ENCODE measurements at regions of chr4 and their contacts with region 1.

Region 1: DNA sequence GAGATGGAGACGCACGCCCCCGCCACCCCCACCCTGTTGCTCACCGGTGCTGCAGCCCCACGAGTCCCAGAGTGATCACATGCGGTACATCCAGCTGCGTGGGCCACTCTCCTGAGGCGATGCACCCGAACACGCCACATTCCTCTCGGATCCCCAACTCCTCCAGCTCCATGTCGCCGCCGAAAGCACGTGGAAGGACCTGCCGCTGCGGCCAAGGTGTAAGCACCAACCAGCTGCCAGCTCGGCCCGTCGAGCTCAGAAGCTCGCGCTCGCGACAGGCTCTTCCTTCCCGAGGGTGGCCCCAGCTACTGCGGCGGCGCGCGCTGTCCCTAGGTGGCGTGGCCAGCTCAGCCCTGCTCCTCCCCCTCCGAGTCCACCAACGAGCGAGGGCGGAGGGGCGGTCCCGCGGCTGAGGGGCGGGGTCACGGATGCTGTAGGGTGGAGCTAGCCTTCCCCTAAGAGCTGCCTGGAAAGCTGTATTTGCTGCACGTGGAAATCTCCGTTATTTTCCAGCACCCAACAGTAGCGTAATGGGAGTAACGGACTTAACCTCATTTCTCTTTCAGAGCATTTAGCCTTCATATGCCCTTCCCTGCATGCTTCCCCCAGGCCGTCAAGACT is at the start of gene PPAT:
- DNase-seq: peak; percentile 93
- ATAC-seq: peak; percentile 90
- H3K4me3 ChIP-seq: peak within 1 kb of the TSS; percentile 75 to 92 (median 80)
- H3K27ac ChIP-seq: peak within 1 kb of the TSS; percentile 98
- H3K4me1 ChIP-seq: peaks cover 48% of the 10 kb centered on the region
- H3K27me3 ChIP-seq: no peaks in the 10 kb centered on the region; a peak in 1 of 5 replicates
- CTCF ChIP-seq: peak; percentile 62
- EP300 ChIP-seq: peak in 1 of 2 experiments; percentile 5; a peak in 1 of 4 replicates
- POLR2A ChIP-seq: peak in 1 of 2 experiments; percentile 83; a peak in 2 of 4 replicates
- RAD21 ChIP-seq: no peak
- total RNA-seq, gene PPAT: 62.6 and 98.4 TPM in 2 replicates

Region 2: DNA sequence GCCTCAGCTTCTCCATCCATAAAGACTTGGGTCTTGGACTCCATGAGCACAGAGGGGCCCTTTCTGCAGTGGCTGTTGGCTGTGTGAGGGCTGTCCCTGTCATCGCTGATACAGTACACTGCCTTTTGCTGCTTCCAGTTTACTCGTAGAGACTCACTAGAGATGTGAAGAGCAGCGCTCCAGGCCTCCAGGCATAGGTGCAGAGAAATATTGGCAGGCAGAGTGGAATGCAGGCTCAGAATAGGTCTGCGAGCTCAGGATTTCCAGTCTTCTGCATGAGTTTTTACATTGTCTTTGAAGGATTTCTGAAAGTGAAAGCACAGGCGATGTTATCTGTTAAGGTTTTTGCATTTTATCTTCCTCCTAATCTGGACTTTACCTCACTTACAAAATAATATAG is 145.5 kb before region 1 on chr4:
- CTCF ChIA-PET with region 1: no interaction called
- POLR2A ChIA-PET with region 1: no interaction called
- in situ Hi-C with region 1: no loop called
- intact Hi-C with region 1: no loop called
- DNase-seq: no peak
- ATAC-seq: no peak
- H3K4me3 ChIP-seq: no peak overlapping the region
- H3K27ac ChIP-seq: no peak overlapping the region
- H3K4me1 ChIP-seq: no peaks in the 10 kb centered on the region
- H3K27me3 ChIP-seq: no peaks in the 10 kb centered on the region; a peak in 1 of 5 replicates
- CTCF ChIP-seq: no peak
- EP300 ChIP-seq: no peak
- POLR2A ChIP-seq: no peak
- RAD21 ChIP-seq: no peak

Region 3: DNA sequence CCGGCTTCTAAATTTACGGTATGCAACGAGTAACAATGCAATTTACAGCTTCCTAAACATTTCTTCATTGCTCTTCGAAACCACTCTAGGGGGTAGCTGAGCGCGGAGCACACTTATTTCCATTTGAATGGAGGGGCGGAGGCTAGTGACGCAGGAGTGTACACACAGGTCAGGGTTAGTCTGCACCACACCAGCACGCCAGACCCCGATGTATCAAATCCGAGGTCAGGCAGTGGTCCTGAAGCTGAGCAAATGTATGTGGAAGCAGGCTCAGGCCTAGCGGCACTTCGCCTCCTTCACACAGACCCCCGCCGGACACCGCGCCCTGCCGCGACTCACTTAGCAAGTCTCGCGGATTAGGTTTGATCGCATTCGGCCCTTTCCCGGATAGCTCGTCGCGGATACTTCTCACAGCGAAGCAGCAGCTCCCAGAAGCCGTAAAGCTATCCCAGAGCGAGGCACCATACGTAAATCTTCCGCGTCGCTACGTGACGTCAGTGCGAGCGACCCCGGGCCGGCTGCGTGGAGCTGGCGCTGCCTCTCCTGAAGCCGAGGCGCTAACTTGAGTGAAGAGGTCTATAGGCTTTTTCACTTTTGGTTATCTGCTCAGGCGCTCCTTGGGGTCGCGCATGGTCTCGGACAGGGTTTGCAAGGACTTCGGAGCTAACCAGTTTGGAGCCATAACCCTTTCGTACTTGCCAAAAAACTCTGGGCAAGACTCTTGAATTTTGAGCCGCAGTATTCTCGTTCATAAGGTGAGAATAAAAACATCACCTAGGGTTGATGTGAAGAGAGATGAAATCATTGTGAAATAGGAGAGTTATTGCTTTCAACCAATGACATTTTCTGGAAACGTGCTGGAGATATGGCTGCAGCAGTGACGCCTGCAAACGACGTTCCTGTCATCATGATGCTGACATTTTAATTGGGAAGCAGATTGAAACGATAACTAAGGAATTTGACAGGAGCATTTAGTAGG is 48.1 kb before region 1 on chr4 and contains the start of gene AASDH:
- CTCF ChIA-PET with region 1: no interaction called
- POLR2A ChIA-PET with region 1: interaction called, 67 read pairs
- in situ Hi-C with region 1: no loop called
- intact Hi-C with region 1: loop called (anchors 1 kb)
- DNase-seq: peak; percentile 88
- ATAC-seq: peak; percentile 92
- H3K4me3 ChIP-seq: peak within 1 kb of the TSS; percentile 71 to 87 (median 85)
- H3K27ac ChIP-seq: peak within 1 kb of the TSS; percentile 97
- H3K4me1 ChIP-seq: peaks cover 28% of the 10 kb centered on the region
- H3K27me3 ChIP-seq: no peaks in the 10 kb centered on the region; a peak in 1 of 5 replicates
- CTCF ChIP-seq: 0 out of 2 replicates have a peak, but pooled peaks have one; percentile 11
- EP300 ChIP-seq: 0 out of 4 replicates have a peak, but pooled peaks of 1 of the 2 experiments have one; percentile 16
- POLR2A ChIP-seq: peak; percentile 91 to 96
- RAD21 ChIP-seq: peak; percentile 27; the same call in 1 of the 2 replicates
- total RNA-seq, gene AASDH: 12.6 and 16.8 TPM in 2 replicates

Region 4: DNA sequence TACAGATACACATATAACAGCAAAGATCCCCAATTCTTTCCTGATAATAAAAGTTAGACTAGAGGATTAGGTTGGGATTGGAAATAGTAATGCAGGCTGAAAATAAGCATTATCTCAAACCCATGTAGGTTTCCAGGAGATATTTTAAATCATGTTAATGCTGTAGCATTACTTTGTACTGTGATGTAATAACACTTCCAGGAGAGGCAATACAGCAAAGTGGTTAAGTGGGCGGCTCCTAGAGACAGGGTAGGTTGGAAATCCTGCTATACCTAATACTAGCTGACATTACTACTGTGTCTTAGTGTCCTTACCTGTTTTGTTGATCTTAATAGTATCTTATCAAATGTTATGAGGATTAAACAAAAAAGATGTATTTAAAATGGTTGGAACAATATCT is 10.3 kb after region 1 on chr4:
- CTCF ChIA-PET with region 1: no interaction called
- POLR2A ChIA-PET with region 1: interaction called, 21 read pairs
- in situ Hi-C with region 1: no loop called
- intact Hi-C with region 1: no loop called
- DNase-seq: no peak
- ATAC-seq: no peak
- H3K4me3 ChIP-seq: no peak overlapping the region
- H3K27ac ChIP-seq: no peak overlapping the region
- H3K4me1 ChIP-seq: peaks cover 52% of the 10 kb centered on the region
- H3K27me3 ChIP-seq: no peaks in the 10 kb centered on the region
- CTCF ChIP-seq: no peak
- EP300 ChIP-seq: no peak
- POLR2A ChIP-seq: no peak; a peak in 1 of 4 replicates
- RAD21 ChIP-seq: no peak

Region 5: GRCh38 chr4:56460085-56460484 is 24.7 kb after region 1 on chr4:
- CTCF ChIA-PET with region 1: no interaction called
- POLR2A ChIA-PET with region 1: interaction called, 28 read pairs
- in situ Hi-C with region 1: no loop called
- intact Hi-C with region 1: loop called (anchors 2 kb)
- DNase-seq: no peak
- ATAC-seq: no peak
- H3K4me3 ChIP-seq: no peak overlapping the region
- H3K27ac ChIP-seq: no peak overlapping the region
- H3K4me1 ChIP-seq: peaks cover under 1% of the 10 kb centered on the region
- H3K27me3 ChIP-seq: no peaks in the 10 kb centered on the region
- CTCF ChIP-seq: no peak
- EP300 ChIP-seq: no peak
- POLR2A ChIP-seq: no peak
- RAD21 ChIP-seq: no peak

Region 6: DNA sequence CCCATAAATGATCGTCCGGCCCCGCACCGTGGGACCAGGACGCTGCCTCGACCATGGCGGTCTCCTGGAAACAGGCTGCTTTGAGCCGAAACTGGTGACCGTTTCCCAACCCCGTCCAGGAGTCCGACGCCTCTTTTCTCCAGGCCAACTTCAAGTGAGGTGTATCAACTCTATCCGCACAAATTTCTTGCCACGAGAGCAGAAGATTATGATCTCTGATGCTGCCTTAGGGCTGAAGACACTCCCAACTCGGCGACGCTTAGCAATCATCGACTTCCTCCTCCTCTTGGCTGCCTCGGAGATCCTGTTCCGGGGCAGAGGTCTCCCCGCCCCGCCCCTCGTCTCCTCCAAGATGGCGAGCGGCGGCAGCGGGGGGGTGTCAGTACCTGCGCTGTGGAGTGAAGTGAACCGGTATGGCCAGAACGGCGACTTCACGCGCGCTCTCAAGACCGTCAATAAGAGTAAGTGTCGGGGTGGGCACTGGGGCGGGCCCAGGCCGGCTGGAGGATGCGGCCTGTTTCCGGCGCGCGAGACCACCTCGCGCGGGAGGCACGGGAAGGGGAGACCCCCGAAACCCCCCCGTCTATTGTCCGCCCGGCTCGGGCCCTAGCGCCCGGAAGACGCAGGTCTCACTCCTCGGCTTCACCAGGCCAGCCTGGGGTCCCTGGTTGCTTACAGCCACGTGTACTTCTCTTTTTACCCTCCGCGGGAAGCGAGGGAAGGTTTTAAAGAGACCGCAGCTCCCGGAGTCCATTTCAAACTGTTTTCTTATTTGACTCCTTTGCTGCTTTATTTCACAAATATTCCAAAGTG is 32.1 kb after region 1 on chr4 and contains the start of gene SRP72:
- CTCF ChIA-PET with region 1: no interaction called
- POLR2A ChIA-PET with region 1: interaction called, 29 read pairs
- in situ Hi-C with region 1: no loop called
- intact Hi-C with region 1: loop called (anchors 2 kb)
- DNase-seq: peak; percentile 82
- ATAC-seq: peak; percentile 91
- H3K4me3 ChIP-seq: peak within 1 kb of the TSS; percentile 79 to 90 (median 83)
- H3K27ac ChIP-seq: peak within 1 kb of the TSS; percentile 83
- H3K4me1 ChIP-seq: peaks cover 25% of the 10 kb centered on the region
- H3K27me3 ChIP-seq: no peaks in the 10 kb centered on the region; a peak in 1 of 5 replicates
- CTCF ChIP-seq: no peak
- EP300 ChIP-seq: no peak
- POLR2A ChIP-seq: peak; percentile 88 to 91
- RAD21 ChIP-seq: no peak
- total RNA-seq, gene SRP72: 75.6 and 126 TPM in 2 replicates

Region 7: GRCh38 chr4:56907489-56908205 is 472.2 kb after region 1 on chr4 and contains the start of gene REST:
- CTCF ChIA-PET with region 1: no interaction called
- POLR2A ChIA-PET with region 1: interaction called, 6 read pairs
- in situ Hi-C with region 1: no loop called
- intact Hi-C with region 1: loop called (anchors 5 kb)
- DNase-seq: peak; percentile 21
- ATAC-seq: peak; percentile 77
- H3K4me3 ChIP-seq: peak within 1 kb of the TSS; percentile 94 to 99 (median 99)
- H3K27ac ChIP-seq: peak within 1 kb of the TSS; percentile 96
- H3K4me1 ChIP-seq: peaks cover 34% of the 10 kb centered on the region
- H3K27me3 ChIP-seq: peaks cover 0 to 12% of the 10 kb centered on the region in 2 experiments; a peak in 1 of 5 replicates
- CTCF ChIP-seq: no peak
- EP300 ChIP-seq: no peak
- POLR2A ChIP-seq: peak; percentile 58 to 66; a peak in 2 of 4 replicates
- RAD21 ChIP-seq: peak; percentile 28; the same call in 1 of the 2 replicates
- total RNA-seq, gene REST: 22.4 and 30.4 TPM in 2 replicates

Region 8: DNA sequence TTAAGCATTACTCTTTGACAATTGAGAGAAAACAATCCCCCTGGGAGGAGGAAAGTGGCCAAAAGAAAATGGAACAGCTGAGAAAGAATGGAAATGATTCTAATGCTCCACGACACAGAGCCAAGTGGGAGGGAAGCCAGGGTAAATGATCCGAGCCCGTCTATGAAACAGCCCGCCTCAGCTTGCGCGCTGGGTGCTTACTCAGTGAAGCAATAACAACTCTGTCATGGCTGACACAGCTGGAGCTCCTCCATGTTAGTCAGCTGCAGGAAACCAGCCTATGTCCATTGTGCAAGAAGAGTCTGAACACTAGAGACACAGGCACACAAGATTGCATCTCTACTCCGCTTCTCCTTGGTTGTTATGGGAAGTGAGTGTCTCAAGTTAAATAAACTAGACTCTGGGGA is 522.7 kb after region 1 on chr4:
- CTCF ChIA-PET with region 1: no interaction called
- POLR2A ChIA-PET with region 1: no interaction called
- in situ Hi-C with region 1: no loop called
- intact Hi-C with region 1: no loop called
- DNase-seq: no peak
- ATAC-seq: peak; percentile 45
- H3K4me3 ChIP-seq: no peak overlapping the region
- H3K27ac ChIP-seq: no peak overlapping the region
- H3K4me1 ChIP-seq: peaks cover 22% of the 10 kb centered on the region
- H3K27me3 ChIP-seq: no peaks in the 10 kb centered on the region
- CTCF ChIP-seq: no peak
- EP300 ChIP-seq: no peak
- POLR2A ChIP-seq: no peak
- RAD21 ChIP-seq: no peak

Region 9: GRCh38 chr4:56977321-56978012 is 542.1 kb after region 1 on chr4 and contains the start of gene NOA1:
- CTCF ChIA-PET with region 1: no interaction called
- POLR2A ChIA-PET with region 1: interaction called, 27 read pairs
- in situ Hi-C with region 1: no loop called
- intact Hi-C with region 1: loop called (anchors 5 kb)
- DNase-seq: peak; percentile 98
- ATAC-seq: peak; percentile 81
- H3K4me3 ChIP-seq: peak within 1 kb of the TSS; percentile 90 to 93 (median 92)
- H3K27ac ChIP-seq: peak within 1 kb of the TSS; percentile 88
- H3K4me1 ChIP-seq: peaks cover 41% of the 10 kb centered on the region
- H3K27me3 ChIP-seq: no peaks in the 10 kb centered on the region; a peak in 1 of 5 replicates
- CTCF ChIP-seq: no peak
- EP300 ChIP-seq: no peak
- POLR2A ChIP-seq: peak; percentile 90 to 98
- RAD21 ChIP-seq: no peak
- total RNA-seq, gene NOA1: 17.3 and 17.9 TPM in 2 replicates

Measured in HepG2 (cell line).